ENCODE measurements at regions of chr15 and their contacts with region 1.

Region 1: GRCh38 chr15:38002883-38003477 is 68.5 kb downstream of the TMCO5A start:
- DNase-seq: peak; percentile 62 to 71
- H3K4me3 ChIP-seq: no peak overlapping the region
- H3K4me3 Mint-ChIP-seq: no peak overlapping the region
- H3K27ac Mint-ChIP-seq: no peak overlapping the region
- H3K4me1 ChIP-seq: no peaks in the 10 kb centered on the region
- H3K4me1 Mint-ChIP-seq: no peaks in the 10 kb centered on the region
- H3K27me3 ChIP-seq: no peaks in the 10 kb centered on the region
- H3K27me3 Mint-ChIP-seq: peaks cover 4% of the 10 kb centered on the region
- CTCF ChIP-seq: peak; percentile 63 to 70

Region 2: DNA sequence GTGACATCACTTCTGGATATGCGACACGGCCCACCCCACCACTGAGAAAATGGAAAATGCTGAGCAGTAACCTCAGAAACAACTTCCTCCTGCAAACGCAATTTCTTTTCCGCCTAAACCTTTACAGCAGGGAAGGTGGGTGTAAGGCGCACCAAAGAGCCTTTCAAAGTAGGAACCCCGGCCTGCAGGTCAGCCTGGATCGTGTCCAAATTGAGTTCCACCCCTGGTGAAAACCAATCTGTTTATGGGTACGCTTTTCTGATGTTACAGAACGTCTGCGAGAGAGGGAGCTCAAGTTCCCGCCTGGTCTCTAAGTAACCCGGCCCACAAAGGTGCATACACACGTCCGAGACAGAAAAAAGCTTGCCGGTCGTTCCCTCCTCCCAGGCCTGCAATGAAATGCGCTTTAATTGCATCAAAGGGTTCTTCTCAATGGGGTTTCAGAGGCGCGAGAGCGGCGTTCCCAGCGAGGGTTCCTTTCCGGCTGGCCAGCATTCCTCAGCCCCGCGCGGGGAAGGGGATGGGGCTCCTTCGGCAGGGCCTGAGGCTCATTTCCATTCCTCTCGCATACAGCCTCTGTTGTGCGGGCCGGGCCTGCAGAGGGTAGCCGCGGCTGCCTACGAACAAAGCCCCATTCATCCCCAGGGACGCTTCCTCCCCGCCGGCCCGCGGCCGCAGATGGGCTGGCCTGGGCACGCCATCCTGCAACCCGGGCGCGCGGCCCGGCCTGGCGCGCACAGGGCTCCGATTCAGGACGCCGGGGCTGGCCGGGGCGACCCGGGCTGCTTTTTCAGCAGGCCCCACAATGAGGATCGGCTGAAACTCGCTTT is 69.6 kb after region 1 on chr15:
- CTCF ChIA-PET with region 1: no interaction called
- POLR2A ChIA-PET with region 1: no interaction called
- intact Hi-C with region 1: loop called (anchors 5 kb)
- DNase-seq: peak; percentile 81 to 83
- H3K4me3 ChIP-seq: peak overlapping the region; percentile 51
- H3K4me3 Mint-ChIP-seq: peak overlapping the region; percentile 81
- H3K27ac Mint-ChIP-seq: peak overlapping the region; percentile 93
- H3K4me1 ChIP-seq: peaks cover 33% of the 10 kb centered on the region; the same call in 1 of the 2 replicates
- H3K4me1 Mint-ChIP-seq: peaks cover 15% of the 10 kb centered on the region
- H3K27me3 ChIP-seq: no peaks in the 10 kb centered on the region
- H3K27me3 Mint-ChIP-seq: no peaks in the 10 kb centered on the region
- CTCF ChIP-seq: no peak

Region 3: DNA sequence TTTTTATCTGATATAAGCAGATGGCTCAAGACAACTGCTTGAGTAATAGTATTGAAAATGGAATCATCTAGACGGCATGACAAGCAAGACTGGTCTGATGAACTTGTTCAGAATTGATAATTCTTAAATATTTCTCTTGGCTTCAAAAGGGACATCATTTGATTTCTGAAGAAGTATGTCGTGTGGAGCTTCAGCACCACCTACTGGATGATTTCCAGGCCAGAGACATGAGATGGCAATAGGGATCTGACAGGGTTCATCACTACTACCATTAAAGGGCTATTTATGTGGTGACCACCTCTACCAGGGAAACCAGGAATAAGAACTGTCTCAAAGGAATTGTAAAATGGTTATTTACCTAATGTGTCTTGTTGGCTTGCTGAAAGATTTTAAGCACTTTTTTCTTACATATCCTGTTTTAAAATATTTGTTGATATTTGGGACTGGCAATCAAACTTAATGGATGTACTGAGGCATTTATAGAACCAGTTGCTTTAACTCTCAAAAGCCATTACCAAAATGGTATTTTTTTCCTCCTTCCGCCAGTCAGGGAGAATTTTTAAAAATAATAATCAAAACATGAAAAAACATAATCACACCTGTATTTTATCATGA is 351.4 kb after region 1 on chr15:
- CTCF ChIA-PET with region 1: interaction called, 3 read pairs
- POLR2A ChIA-PET with region 1: no interaction called
- intact Hi-C with region 1: loop called (anchors 1 kb)
- DNase-seq: peak; percentile 58 to 70
- H3K4me3 ChIP-seq: no peak overlapping the region
- H3K4me3 Mint-ChIP-seq: no peak overlapping the region
- H3K27ac Mint-ChIP-seq: no peak overlapping the region
- H3K4me1 ChIP-seq: no peaks in the 10 kb centered on the region
- H3K4me1 Mint-ChIP-seq: no peaks in the 10 kb centered on the region
- H3K27me3 ChIP-seq: no peaks in the 10 kb centered on the region
- H3K27me3 Mint-ChIP-seq: no peaks in the 10 kb centered on the region
- CTCF ChIP-seq: peak; percentile 69 to 70

Region 4: DNA sequence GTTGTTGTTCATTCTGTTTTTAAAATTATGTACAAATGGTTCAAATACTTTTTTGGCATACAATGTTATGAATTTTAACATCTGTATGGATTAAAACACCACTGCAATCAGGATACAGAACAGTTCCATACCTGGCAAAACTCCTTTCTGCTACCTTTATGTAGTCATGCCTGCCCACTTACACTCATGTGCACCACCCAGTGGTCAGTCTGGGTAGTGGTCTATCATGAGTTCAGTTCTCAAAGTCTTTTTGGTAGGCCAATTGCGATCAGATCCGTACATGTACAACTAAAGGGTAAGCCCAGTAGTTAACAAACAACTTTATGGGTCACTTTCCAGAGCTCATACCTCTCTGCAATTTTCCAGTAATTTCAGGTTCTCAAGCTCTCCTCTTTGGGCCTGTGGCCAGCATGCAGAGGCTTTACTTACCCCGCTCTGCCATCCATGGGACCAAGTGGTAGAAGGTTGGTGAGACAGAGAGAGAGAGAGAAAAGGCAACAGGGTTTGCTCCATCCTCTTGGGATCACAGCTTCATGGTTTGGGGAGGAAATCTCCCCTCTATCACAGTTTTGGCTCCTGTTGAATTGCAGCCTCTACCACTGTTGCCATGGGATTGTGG is 387.1 kb after region 1 on chr15:
- CTCF ChIA-PET with region 1: no interaction called
- POLR2A ChIA-PET with region 1: no interaction called
- intact Hi-C with region 1: loop called (anchors 1 kb)
- DNase-seq: peak; percentile 67 to 78
- H3K4me3 ChIP-seq: no peak overlapping the region
- H3K4me3 Mint-ChIP-seq: no peak overlapping the region
- H3K27ac Mint-ChIP-seq: no peak overlapping the region
- H3K4me1 ChIP-seq: no peaks in the 10 kb centered on the region
- H3K4me1 Mint-ChIP-seq: no peaks in the 10 kb centered on the region
- H3K27me3 ChIP-seq: no peaks in the 10 kb centered on the region
- H3K27me3 Mint-ChIP-seq: peaks cover 11% of the 10 kb centered on the region
- CTCF ChIP-seq: peak; percentile 65 to 85

Region 5: DNA sequence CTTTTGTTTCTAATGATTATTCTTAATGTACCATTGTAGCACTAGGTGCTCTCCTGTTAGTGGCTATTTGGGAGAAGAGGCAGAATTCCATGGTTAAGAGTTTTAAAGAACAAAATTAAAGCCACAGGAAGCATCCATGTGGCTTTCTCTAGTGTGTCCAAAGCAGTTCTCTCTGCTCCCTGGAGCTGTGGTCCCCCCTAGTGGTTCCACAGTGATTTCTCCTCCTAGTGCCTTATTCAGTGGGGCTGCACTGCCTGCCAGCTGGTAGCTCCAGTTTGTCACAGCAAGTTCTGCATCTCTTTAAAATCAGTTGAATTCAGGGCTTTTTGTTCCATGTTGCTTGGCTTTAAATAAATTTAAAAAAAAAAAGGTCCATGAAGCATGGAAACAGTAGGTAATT is 411.4 kb after region 1 on chr15:
- CTCF ChIA-PET with region 1: no interaction called
- POLR2A ChIA-PET with region 1: no interaction called
- intact Hi-C with region 1: loop called (anchors 1 kb)
- DNase-seq: peak; percentile 56 to 70
- H3K4me3 ChIP-seq: no peak overlapping the region
- H3K4me3 Mint-ChIP-seq: no peak overlapping the region
- H3K27ac Mint-ChIP-seq: no peak overlapping the region
- H3K4me1 ChIP-seq: no peaks in the 10 kb centered on the region
- H3K4me1 Mint-ChIP-seq: peaks cover 6% of the 10 kb centered on the region
- H3K27me3 ChIP-seq: no peaks in the 10 kb centered on the region
- H3K27me3 Mint-ChIP-seq: no peaks in the 10 kb centered on the region
- CTCF ChIP-seq: peak; percentile 65 to 67

Region 6: GRCh38 chr15:38683382-38684242 is 680.6 kb after region 1 on chr15:
- CTCF ChIA-PET with region 1: no interaction called
- POLR2A ChIA-PET with region 1: no interaction called
- intact Hi-C with region 1: loop called (anchors 5 kb)
- DNase-seq: peak in 1 of 2 experiments; percentile 50
- H3K4me3 ChIP-seq: no peak overlapping the region
- H3K4me3 Mint-ChIP-seq: no peak overlapping the region
- H3K27ac Mint-ChIP-seq: no peak overlapping the region
- H3K4me1 ChIP-seq: no peaks in the 10 kb centered on the region
- H3K4me1 Mint-ChIP-seq: peaks cover 8% of the 10 kb centered on the region
- H3K27me3 ChIP-seq: no peaks in the 10 kb centered on the region
- H3K27me3 Mint-ChIP-seq: peaks cover 3% of the 10 kb centered on the region
- CTCF ChIP-seq: peak; percentile 58 to 65

Measured in Caco-2 (cell line).